ENCODE measurements at regions of chr9 and their contacts with region 1.

Region 1: GRCh38 chr9:81689343-81690190 is at the start of gene TLE1:
- DNase-seq: peak; percentile 100
- H3K4me3 ChIP-seq: peak within 1 kb of the TSS; percentile 68 to 90 (median 82)
- H3K27ac ChIP-seq: peak within 1 kb of the TSS; percentile 90 to 94 (median 92)
- H3K4me1 ChIP-seq: peaks cover 4 to 18% of the 10 kb centered on the region in 2 donors
- H3K27me3 ChIP-seq: no peaks in the 10 kb centered on the region
- CTCF ChIP-seq: no peak
- POLR2A ChIP-seq: peak; percentile 91 to 95
- total RNA-seq, gene TLE1: 40.7 to 91.1 (median 58.4) TPM

Region 2: DNA sequence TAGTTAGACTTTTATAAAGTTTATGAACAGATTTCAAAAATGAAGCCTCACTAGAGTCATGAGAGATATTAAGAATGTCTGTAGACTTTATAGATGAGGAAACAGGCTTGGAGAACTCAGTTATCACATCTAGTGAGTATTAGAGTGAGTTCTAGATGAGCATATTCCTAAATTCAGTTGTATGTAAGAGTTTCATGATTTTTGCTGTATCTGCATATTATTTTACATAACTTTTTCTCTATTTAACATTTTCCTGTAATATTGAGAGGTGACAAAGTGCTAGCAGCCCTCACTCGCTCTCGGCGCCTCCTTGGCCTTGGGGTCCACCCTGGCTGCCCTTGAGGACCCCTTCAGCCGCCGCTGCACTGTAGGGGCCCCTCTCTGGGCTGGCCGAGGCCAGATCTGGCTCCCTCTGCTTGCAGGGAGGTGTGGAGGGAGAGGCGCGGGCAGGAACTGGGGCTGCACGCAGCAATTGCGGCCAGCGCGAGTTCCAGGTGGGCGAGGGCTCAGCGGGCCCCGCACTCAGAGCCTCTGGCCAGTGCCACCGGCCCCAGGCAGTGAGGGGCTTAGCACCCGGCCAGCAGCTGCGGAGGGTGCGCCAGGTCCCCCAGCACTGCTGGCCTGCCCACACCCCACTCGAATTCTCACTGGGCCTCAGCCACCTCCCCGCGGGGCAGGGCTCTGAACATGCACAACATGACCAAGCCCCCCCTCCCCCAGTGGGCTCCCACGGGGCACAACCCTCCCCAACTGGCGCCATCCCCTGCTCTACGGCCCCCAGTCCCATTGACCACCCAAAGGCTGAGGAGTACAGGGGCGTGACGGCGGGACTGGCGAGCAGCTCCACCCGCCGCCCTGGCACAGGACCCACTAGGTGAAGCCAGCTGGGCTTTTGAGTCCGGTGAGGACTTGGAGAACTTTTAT is 182.4 kb before region 1 on chr9:
- intact Hi-C with region 1: no loop called
- DNase-seq: no peak
- H3K4me3 ChIP-seq: no peak overlapping the region
- H3K27ac ChIP-seq: no peak overlapping the region
- H3K4me1 ChIP-seq: no peaks in the 10 kb centered on the region
- H3K27me3 ChIP-seq: no peaks in the 10 kb centered on the region
- CTCF ChIP-seq: no peak
- POLR2A ChIP-seq: no peak

Region 3: GRCh38 chr9:81521892-81522291 is 167.7 kb before region 1 on chr9:
- intact Hi-C with region 1: loop called (anchors 5 kb)
- DNase-seq: no peak
- H3K4me3 ChIP-seq: no peak overlapping the region
- H3K27ac ChIP-seq: no peak overlapping the region
- H3K4me1 ChIP-seq: no peaks in the 10 kb centered on the region
- H3K27me3 ChIP-seq: no peaks in the 10 kb centered on the region
- CTCF ChIP-seq: no peak
- POLR2A ChIP-seq: no peak

Region 4: DNA sequence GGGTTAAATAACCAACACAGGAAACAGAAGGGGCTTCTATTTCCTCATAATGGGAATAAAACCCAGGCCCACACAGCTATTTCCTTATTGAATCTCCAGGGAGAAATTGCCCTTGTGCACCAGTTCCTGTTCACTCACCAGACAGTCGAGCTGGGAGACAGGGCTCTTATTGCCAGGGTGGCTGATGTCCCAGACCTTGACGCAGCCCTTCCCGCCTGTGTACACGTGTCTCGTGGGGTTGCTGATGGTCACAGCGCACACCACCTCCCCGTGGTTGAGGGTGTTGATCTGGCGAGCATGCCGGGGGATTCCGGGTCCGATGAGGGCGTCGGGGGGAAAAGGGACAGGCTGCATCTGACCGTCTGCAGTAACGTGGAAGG is 96.7 kb before region 1 on chr9:
- intact Hi-C with region 1: loop called (anchors 10 kb)
- DNase-seq: peak; percentile 22 to 26
- H3K4me3 ChIP-seq: no peak overlapping the region
- H3K27ac ChIP-seq: no peak overlapping the region
- H3K4me1 ChIP-seq: peaks cover 11 to 18% of the 10 kb centered on the region in 2 donors
- H3K27me3 ChIP-seq: no peaks in the 10 kb centered on the region
- CTCF ChIP-seq: no peak
- POLR2A ChIP-seq: no peak

Region 5: GRCh38 chr9:81848472-81848871 is 158.9 kb after region 1 on chr9:
- intact Hi-C with region 1: loop called (anchors 10 kb)
- DNase-seq: no peak
- H3K4me3 ChIP-seq: no peak overlapping the region
- H3K27ac ChIP-seq: no peak overlapping the region
- H3K4me1 ChIP-seq: peaks cover 8 to 24% of the 10 kb centered on the region in 2 donors
- H3K27me3 ChIP-seq: no peaks in the 10 kb centered on the region
- CTCF ChIP-seq: peak in 4 of 6 experiments; percentile 28 to 64 (median 54)
- POLR2A ChIP-seq: no peak

Measured in thyroid gland (tissue), 4 donors.